ENCODE measurements at regions of chr6 and their contacts with region 1.

Region 1: DNA sequence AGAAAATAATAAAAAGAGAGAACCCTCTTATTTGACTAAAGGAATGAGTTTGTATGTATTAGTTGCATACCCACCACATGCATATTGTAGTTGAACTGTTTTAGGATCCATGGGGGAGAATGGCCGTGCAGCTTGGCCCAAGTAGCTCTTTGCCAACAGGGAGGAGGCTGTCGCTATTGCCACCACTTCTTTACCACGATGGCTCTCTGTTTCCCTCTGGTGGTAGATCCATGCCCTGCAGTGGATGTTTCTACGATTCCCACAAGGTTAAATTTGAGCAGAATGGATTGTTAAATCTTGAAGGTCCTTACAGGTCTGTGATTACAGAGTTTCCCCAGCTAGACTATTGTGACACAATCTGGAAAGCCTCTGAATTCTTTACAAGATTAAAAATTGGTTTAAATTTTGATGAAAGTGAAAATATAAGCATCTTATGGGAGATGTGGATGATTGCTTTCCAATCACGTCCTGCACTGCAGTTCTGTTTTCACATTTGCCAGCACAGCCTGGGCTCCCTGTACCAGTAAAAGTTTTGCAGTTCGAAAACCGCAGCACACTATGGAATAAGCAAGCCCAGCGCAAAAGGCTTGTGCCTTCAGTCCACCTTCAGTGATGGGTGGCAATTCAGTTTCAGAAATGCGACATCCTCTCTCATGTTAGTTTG is 34.4 kb upstream of the FNDC1 start:
- DNase-seq: peak; percentile 69 to 77 (median 73)
- H3K4me3 ChIP-seq: no peak overlapping the region
- H3K4me3 Mint-ChIP-seq: no peak overlapping the region
- H3K27ac ChIP-seq: no peak overlapping the region
- H3K27ac Mint-ChIP-seq: no peak overlapping the region
- H3K4me1 ChIP-seq: peaks cover 6% of the 10 kb centered on the region
- H3K4me1 Mint-ChIP-seq: peaks cover 0 to 6% (median 4%) of the 10 kb centered on the region in 4 donors
- H3K27me3 ChIP-seq: no peaks in the 10 kb centered on the region
- H3K27me3 Mint-ChIP-seq: peaks cover 5 to 8% of the 10 kb centered on the region in 2 donors

Region 2: GRCh38 chr6:158018851-158019361 is 1115.9 kb before region 1 on chr6:
- CTCF ChIA-PET with region 1: no interaction called
- POLR2A ChIA-PET with region 1: no interaction called
- intact Hi-C with region 1: no loop called
- DNase-seq: no peak
- H3K4me3 ChIP-seq: no peak overlapping the region
- H3K4me3 Mint-ChIP-seq: no peak overlapping the region
- H3K27ac ChIP-seq: no peak overlapping the region
- H3K27ac Mint-ChIP-seq: peak overlapping the region in 1 of 7 donors; percentile 64
- H3K4me1 ChIP-seq: peaks cover 16% of the 10 kb centered on the region
- H3K4me1 Mint-ChIP-seq: peaks cover 12 to 33% (median 19%) of the 10 kb centered on the region in 4 donors
- H3K27me3 ChIP-seq: no peaks in the 10 kb centered on the region
- H3K27me3 Mint-ChIP-seq: no peaks in the 10 kb centered on the region

Region 3: GRCh38 chr6:158938811-158939254 is 196.0 kb before region 1 on chr6:
- CTCF ChIA-PET with region 1: no interaction called
- POLR2A ChIA-PET with region 1: no interaction called
- intact Hi-C with region 1: no loop called
- DNase-seq: peak in 3 of 5 donors; percentile 9 to 22 (median 13)
- H3K4me3 ChIP-seq: peak overlapping the region in 1 of 2 donors; percentile 5
- H3K4me3 Mint-ChIP-seq: peak overlapping the region; percentile 73 to 88 (median 81)
- H3K27ac ChIP-seq: no peak overlapping the region
- H3K27ac Mint-ChIP-seq: peak overlapping the region in 4 of 7 donors; percentile 35 to 52 (median 47)
- H3K4me1 ChIP-seq: peaks cover 4% of the 10 kb centered on the region
- H3K4me1 Mint-ChIP-seq: peaks cover 8 to 16% (median 12%) of the 10 kb centered on the region in 4 donors
- H3K27me3 ChIP-seq: no peaks in the 10 kb centered on the region
- H3K27me3 Mint-ChIP-seq: peaks cover 0 to 4% of the 10 kb centered on the region in 2 donors

Region 4: GRCh38 chr6:158972241-158973233 is 162.3 kb before region 1 on chr6:
- CTCF ChIA-PET with region 1: interaction called, 21 read pairs
- POLR2A ChIA-PET with region 1: no interaction called
- intact Hi-C with region 1: no loop called
- DNase-seq: peak in 4 of 5 donors; percentile 57 to 66 (median 60)
- H3K4me3 ChIP-seq: no peak overlapping the region
- H3K4me3 Mint-ChIP-seq: no peak overlapping the region
- H3K27ac ChIP-seq: no peak overlapping the region
- H3K27ac Mint-ChIP-seq: peak overlapping the region in 2 of 7 donors; percentile 31 to 47
- H3K4me1 ChIP-seq: no peaks in the 10 kb centered on the region
- H3K4me1 Mint-ChIP-seq: peaks cover 0 to 3% (median 0%) of the 10 kb centered on the region in 4 donors
- H3K27me3 ChIP-seq: no peaks in the 10 kb centered on the region
- H3K27me3 Mint-ChIP-seq: no peaks in the 10 kb centered on the region

Region 5: GRCh38 chr6:159008656-159009288 is 126.1 kb before region 1 on chr6:
- CTCF ChIA-PET with region 1: interaction called, 440 read pairs
- POLR2A ChIA-PET with region 1: interaction called, 36 read pairs
- intact Hi-C with region 1: loop called (anchors 1 kb)
- DNase-seq: peak; percentile 54 to 68 (median 66)
- H3K4me3 ChIP-seq: peak overlapping the region in 1 of 2 donors; percentile 29
- H3K4me3 Mint-ChIP-seq: peak overlapping the region; percentile 64 to 77 (median 72)
- H3K27ac ChIP-seq: no peak overlapping the region
- H3K27ac Mint-ChIP-seq: peak overlapping the region; percentile 7 to 90 (median 77)
- H3K4me1 ChIP-seq: peaks cover 44% of the 10 kb centered on the region
- H3K4me1 Mint-ChIP-seq: peaks cover 37 to 55% (median 47%) of the 10 kb centered on the region in 4 donors
- H3K27me3 ChIP-seq: no peaks in the 10 kb centered on the region
- H3K27me3 Mint-ChIP-seq: no peaks in the 10 kb centered on the region

Region 6: GRCh38 chr6:159118924-159119323 is 15.9 kb before region 1 on chr6:
- CTCF ChIA-PET with region 1: interaction called, 193 read pairs
- POLR2A ChIA-PET with region 1: no interaction called
- intact Hi-C with region 1: no loop called
- DNase-seq: no peak
- H3K4me3 ChIP-seq: no peak overlapping the region
- H3K4me3 Mint-ChIP-seq: no peak overlapping the region
- H3K27ac ChIP-seq: no peak overlapping the region
- H3K27ac Mint-ChIP-seq: no peak overlapping the region
- H3K4me1 ChIP-seq: peaks cover 8% of the 10 kb centered on the region
- H3K4me1 Mint-ChIP-seq: peaks cover 5 to 13% (median 7%) of the 10 kb centered on the region in 4 donors
- H3K27me3 ChIP-seq: no peaks in the 10 kb centered on the region
- H3K27me3 Mint-ChIP-seq: no peaks in the 10 kb centered on the region

Measured in CD4-positive, alpha-beta memory T cell (primary cell).